Colonic mucosa (tissue), 4 donors: ENCODE measurements at regions of chr10 and their contacts with region 1.

Region 1: DNA sequence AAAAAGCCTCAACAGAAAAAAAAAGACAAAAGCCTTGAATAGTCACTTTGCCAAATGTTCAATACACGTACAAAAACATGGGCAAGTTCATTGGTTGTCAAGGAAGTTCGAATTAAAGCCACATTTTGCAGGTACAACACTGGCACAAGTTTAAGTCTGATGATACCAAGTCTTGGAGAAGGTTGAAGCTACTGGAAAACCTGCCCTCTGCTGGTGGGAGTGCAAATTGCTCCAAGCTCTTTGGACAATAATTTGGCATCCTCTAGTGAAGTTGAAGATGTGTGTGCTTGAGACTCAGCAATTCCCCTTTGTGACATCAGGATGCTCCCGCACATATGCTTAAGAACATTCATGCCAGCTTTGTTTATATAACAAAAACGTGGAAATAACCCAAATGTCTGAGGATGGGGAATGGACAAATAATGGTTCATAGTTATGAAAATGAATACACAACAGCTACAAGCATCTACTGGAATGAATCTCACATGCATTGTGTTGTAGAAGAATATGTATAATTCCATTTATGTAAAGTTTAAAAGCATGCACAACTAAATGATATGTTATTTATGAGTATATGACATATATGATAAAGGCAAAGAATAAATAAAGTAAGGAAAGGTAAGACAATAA is 120.0 kb upstream of the PLPP4 start:
- DNase-seq: peak; percentile 51
- H3K4me3 ChIP-seq: no peak overlapping the region
- H3K27ac ChIP-seq: no peak overlapping the region
- H3K4me1 ChIP-seq: no peaks in the 10 kb centered on the region
- H3K27me3 ChIP-seq: no peaks in the 10 kb centered on the region
- CTCF ChIP-seq: peak; percentile 65

Region 2: GRCh38 chr10:119933179-119933578 is 403.8 kb before region 1 on chr10:
- intact Hi-C with region 1: loop called (anchors 2 kb)
- DNase-seq: no peak
- H3K4me3 ChIP-seq: no peak overlapping the region
- H3K27ac ChIP-seq: no peak overlapping the region
- H3K4me1 ChIP-seq: no peaks in the 10 kb centered on the region
- H3K27me3 ChIP-seq: no peaks in the 10 kb centered on the region
- CTCF ChIP-seq: no peak

Region 3: GRCh38 chr10:120011359-120012130 is 325.5 kb before region 1 on chr10:
- intact Hi-C with region 1: loop called (anchors 10 kb)
- DNase-seq: no peak
- H3K4me3 ChIP-seq: no peak overlapping the region
- H3K27ac ChIP-seq: no peak overlapping the region
- H3K4me1 ChIP-seq: no peaks in the 10 kb centered on the region
- H3K27me3 ChIP-seq: no peaks in the 10 kb centered on the region
- CTCF ChIP-seq: no peak

Region 4: DNA sequence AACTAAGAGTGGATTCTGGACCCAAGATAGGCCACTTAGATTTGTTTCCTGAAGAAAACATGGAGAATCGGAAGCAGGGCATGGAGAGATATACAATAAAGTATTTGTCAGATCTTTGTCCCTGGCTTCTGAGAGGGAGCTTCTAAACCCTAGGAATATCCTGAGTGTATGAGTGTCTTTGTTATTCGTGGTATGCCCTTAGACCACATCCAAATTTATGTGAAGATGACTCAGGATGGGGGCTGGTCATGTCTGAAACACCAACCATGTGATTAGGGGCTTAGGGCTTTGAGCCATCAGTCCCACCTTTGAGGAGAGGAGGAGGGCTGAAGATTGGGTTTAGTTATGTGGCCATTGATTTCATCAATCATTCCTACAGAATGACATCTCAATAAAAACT is 50.3 kb after region 1 on chr10:
- intact Hi-C with region 1: no loop called
- DNase-seq: no peak
- H3K4me3 ChIP-seq: no peak overlapping the region
- H3K27ac ChIP-seq: no peak overlapping the region
- H3K4me1 ChIP-seq: no peaks in the 10 kb centered on the region
- H3K27me3 ChIP-seq: no peaks in the 10 kb centered on the region
- CTCF ChIP-seq: no peak